Activated CD4-positive, alpha-beta memory T cell treated with anti-CD3 and anti-CD28 coated beads for 36 hours (primary cell): ENCODE measurements at regions of chr4 and their contacts with region 1.

Region 1: DNA sequence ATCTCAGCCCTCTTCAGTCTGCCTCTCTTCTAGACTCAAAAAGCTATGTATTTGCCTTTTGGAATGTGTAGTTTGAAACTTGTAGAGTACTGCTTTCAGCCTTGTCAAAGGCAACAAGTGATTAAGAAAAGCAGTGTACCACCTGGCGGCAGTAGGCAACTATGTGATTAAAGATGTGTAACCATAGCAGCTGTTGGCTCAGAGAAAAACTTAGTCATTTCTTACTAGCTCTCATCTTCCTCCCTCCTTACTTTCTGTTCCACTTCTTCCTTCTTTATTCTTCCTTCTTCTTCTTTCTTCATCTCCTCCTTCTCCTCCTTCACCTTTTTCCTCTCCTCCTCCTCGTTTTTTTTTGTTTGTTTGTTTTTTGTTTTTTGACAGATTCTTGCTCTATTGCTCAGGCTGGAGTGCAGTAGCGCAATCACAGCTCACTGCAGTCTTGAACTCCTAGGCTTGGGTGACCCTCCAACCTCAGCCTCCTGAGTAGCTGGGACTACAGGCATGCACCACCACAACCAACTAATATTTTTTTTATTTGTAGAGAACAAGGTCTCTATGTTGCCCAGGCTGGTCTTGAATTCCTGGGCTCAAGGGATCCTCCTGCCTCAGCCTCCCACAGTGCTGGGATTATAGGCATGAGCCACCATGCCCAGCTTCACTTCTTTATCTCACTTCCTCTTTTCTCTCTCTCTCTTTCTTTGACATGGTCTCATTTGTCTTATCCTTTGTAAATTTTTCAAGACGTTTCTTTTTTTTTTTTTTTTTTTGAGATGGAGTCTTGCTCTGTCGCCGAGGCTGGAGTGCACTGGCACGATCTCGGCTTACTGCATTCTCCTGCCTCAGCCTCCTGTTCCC is 32.6 kb downstream of the ABHD18 start:
- DNase-seq: peak; percentile 60
- H3K4me3 Mint-ChIP-seq: no peak overlapping the region
- H3K27ac Mint-ChIP-seq: peak overlapping the region; percentile 36
- H3K4me1 Mint-ChIP-seq: peaks cover 22% of the 10 kb centered on the region
- H3K27me3 Mint-ChIP-seq: no peaks in the 10 kb centered on the region

Region 2: DNA sequence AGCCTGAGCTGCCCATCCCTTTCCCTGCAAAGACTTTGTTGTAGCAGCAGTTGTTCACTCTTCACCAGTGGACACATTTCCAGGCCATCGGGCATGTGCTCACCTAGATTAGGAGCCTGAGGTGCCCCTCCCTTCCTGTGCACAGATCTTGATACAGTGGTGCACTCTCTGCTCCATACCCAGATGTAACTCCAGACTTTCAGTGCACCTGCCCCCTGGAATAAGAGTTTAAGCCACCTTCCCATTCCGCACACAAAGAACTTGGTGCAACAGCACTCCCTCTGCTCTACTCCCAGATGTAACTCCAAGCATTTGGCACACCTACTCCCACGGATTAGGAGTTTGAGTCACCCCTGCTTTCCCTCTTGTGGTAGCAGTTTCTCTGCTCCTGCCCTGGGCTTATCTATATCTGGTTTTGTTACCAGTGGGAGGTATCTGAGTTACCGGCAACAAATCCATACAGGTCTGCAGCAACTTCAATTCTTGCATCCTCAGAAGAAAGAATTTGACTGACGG is 153.1 kb before region 1 on chr4:
- CTCF ChIA-PET with region 1: no interaction called
- POLR2A ChIA-PET with region 1: no interaction called
- intact Hi-C with region 1: no loop called
- DNase-seq: no peak
- H3K4me3 Mint-ChIP-seq: no peak overlapping the region
- H3K27ac Mint-ChIP-seq: no peak overlapping the region
- H3K4me1 Mint-ChIP-seq: no peaks in the 10 kb centered on the region
- H3K27me3 Mint-ChIP-seq: no peaks in the 10 kb centered on the region

Region 3: DNA sequence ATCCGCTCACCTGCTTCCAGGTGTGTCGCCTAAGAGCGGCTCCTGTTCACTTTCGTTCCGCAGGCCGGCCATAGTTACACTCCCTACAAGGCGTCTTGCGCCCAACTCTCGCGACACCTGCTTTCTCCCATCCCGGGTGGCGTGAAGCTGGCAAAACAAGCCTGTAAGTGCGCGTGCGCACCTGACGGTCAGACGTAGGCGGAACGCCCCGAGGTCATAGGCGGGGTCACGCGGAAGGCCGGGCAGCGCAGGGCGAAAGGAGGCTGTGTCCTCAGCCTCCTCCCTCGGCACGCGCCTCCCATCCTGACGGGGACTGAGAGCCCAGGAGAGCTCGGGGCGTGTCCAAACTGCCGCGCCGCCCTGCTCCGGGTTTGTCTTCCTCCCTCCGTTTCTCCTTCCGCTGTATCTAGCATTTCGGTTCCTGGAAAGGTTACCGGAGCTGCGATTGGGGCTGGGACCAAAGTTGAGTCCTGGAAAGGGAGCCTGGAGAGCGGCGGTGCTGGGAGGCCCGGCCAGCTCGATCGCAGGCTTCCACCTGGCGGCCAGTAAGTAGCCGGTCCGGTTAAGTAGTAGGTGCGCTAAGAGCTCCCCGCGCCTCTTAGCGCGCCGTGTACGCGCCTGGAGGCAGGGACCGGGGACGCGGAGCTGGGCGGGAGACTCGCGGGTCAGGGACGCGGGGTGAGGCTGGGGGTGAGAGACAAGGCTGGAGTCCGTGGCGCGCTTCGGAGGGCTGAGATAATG is 32.5 kb before region 1 on chr4 and contains the starts of genes ABHD18 and MFSD8:
- CTCF ChIA-PET with region 1: interaction called, 6 read pairs
- POLR2A ChIA-PET with region 1: interaction called, 9 read pairs
- intact Hi-C with region 1: loop called (anchors 1 kb)
- DNase-seq: peak; percentile 100
- H3K4me3 Mint-ChIP-seq: peak within 1 kb of the TSS; percentile 94
- H3K27ac Mint-ChIP-seq: peak within 1 kb of the TSS; percentile 95
- H3K4me1 Mint-ChIP-seq: peaks cover 38% of the 10 kb centered on the region
- H3K27me3 Mint-ChIP-seq: no peaks in the 10 kb centered on the region
- total RNA-seq, gene ABHD18: 17.3 to 18.9 TPM
- total RNA-seq, gene MFSD8: 13.0 to 15.3 TPM

Region 4: DNA sequence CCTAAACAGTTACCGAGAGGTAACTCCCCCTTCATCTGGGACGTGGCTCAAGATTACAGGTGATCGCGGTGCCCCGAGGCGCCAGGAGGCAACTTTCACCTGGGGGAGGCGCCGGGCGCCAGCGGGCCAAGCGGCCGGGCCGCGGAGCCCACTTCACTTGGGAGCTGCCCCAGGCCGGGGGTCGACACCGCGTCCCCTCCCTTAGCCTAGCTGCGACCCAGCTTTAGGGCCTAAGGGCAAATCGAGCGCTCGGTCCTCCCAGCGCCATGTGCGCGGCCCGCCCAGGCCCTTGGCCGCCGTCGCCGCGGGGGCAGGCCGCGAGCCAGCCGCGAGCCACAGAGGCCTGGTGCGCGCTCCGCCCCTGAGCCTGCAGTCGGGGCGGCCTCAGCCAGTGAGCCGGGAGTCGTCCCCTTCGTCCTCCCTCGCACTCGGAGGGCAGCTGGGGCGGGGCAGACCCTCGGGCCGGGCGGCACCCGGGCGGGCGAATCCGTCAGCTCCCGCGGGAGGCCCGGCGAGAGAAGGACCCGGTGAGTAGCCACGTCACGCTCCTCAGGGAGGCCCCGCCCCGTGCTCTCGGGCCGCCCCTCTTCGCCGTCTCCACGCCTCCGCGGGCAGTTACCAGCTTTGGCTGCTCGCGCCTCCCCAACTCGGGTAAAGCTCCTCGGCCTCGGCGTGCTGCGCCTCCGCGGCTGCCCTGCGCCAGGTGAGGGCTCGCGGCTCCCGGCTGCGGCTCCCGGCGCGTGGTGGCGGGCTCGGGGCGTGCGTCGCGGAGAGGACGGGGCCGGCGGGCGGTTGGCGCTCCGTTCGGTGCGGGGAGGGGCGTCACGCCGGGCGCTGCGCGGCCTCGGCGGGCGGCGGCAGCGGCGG is 63.2 kb after region 1 on chr4 and contains the start of gene LARP1B:
- CTCF ChIA-PET with region 1: interaction called, 3 read pairs
- POLR2A ChIA-PET with region 1: interaction called, 7 read pairs
- intact Hi-C with region 1: loop called (anchors 2 kb)
- DNase-seq: peak; percentile 95
- H3K4me3 Mint-ChIP-seq: peak within 1 kb of the TSS; percentile 87
- H3K27ac Mint-ChIP-seq: peak within 1 kb of the TSS; percentile 87
- H3K4me1 Mint-ChIP-seq: peaks cover 15% of the 10 kb centered on the region
- H3K27me3 Mint-ChIP-seq: no peaks in the 10 kb centered on the region
- total RNA-seq, gene LARP1B: 23.5 to 25.5 TPM